ENCODE measurements at regions of chrX and their contacts with region 1.

Region 1: GRCh38 chrX:73850124-73851013 is 287.4 kb downstream of the CHIC1 start:
- DNase-seq: peak; percentile 43
- ATAC-seq: no peak

Region 2: DNA sequence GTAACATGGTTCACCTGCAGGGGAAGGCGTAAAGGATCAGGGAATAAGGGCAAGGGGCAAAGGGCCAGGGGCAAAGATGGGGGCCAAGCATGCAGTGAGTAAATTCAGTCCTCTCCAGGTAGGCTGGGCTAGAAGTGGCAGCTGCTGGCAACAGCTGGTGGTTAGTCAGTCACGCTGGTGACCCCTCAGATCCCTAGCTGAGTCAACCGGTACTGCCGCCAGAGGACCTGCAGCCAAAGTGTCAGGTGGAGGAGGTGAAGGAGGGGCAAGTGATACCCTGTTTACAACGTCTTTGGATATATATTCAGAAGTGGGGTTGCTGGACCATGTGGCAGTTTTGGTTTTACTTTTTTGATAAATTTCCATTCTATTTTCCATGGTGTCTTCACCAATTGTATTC is 611.1 kb before region 1 on chrX:
- intact Hi-C with region 1: no loop called
- DNase-seq: no peak
- ATAC-seq: no peak

Region 3: DNA sequence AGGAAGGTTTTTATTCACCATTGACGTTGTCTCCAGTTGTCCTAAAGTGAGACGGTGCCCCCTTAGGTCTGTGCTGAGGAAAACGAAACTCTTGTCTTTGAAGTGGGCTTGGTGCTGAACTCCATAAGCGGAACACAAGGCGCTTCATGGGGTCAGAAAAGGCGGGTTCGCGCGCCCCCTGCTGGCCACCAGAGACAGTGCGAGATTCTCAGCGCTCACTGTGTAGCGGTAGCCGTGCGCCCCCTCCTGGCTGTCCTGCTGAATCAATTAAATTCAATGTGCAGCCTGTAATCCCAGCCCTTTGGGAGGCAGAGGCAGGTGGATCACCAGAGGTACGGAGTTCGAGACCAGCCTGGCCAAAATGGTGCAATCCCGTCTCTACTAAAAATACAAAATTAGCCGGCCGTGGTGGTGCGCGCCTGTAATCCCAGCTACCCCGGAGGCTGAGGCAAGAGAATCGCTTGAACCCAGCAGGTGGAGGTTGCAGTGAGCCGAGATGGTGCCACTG is 700.0 kb after region 1 on chrX:
- intact Hi-C with region 1: loop called in 1 of 2 experiments (anchors 5 kb)
- DNase-seq: peak; percentile 88
- ATAC-seq: peak; percentile 91 to 95